Endothelial cell of umbilical vein (primary cell): ENCODE measurements at regions of chr15 and their contacts with region 1.

Region 1: GRCh38 chr15:75647370-75648155 is at the start of gene SNX33:
- DNase-seq: peak; percentile 76
- H3K4me3 ChIP-seq: peak within 1 kb of the TSS; percentile 53 to 72 (median 64)
- H3K27ac ChIP-seq: peak within 1 kb of the TSS; percentile 37
- H3K4me1 ChIP-seq: peaks cover 29% of the 10 kb centered on the region
- H3K27me3 ChIP-seq: no peaks in the 10 kb centered on the region
- CTCF ChIP-seq: peak; percentile 67 to 74
- POLR2A ChIP-seq: no peak
- total RNA-seq, gene SNX33: 10.6 and 12.6 TPM in 2 replicates

Region 2: GRCh38 chr15:75508840-75509532 is 138.6 kb before region 1 on chr15:
- CTCF ChIA-PET with region 1: interaction called, 16 read pairs
- POLR2A ChIA-PET with region 1: no interaction called
- dilution Hi-C with region 1: no loop called
- intact Hi-C with region 1: no loop called
- DNase-seq: peak; percentile 58
- H3K4me3 ChIP-seq: no peak overlapping the region
- H3K27ac ChIP-seq: no peak overlapping the region
- H3K4me1 ChIP-seq: no peaks in the 10 kb centered on the region
- H3K27me3 ChIP-seq: no peaks in the 10 kb centered on the region
- CTCF ChIP-seq: peak; percentile 30 to 61
- POLR2A ChIP-seq: no peak

Region 3: GRCh38 chr15:75561888-75562287 is 85.7 kb before region 1 on chr15:
- CTCF ChIA-PET with region 1: no interaction called
- POLR2A ChIA-PET with region 1: no interaction called
- dilution Hi-C with region 1: no loop called
- intact Hi-C with region 1: no loop called
- DNase-seq: no peak
- H3K4me3 ChIP-seq: no peak overlapping the region
- H3K27ac ChIP-seq: no peak overlapping the region
- H3K4me1 ChIP-seq: no peaks in the 10 kb centered on the region
- H3K27me3 ChIP-seq: no peaks in the 10 kb centered on the region
- CTCF ChIP-seq: no peak
- POLR2A ChIP-seq: no peak

Region 4: DNA sequence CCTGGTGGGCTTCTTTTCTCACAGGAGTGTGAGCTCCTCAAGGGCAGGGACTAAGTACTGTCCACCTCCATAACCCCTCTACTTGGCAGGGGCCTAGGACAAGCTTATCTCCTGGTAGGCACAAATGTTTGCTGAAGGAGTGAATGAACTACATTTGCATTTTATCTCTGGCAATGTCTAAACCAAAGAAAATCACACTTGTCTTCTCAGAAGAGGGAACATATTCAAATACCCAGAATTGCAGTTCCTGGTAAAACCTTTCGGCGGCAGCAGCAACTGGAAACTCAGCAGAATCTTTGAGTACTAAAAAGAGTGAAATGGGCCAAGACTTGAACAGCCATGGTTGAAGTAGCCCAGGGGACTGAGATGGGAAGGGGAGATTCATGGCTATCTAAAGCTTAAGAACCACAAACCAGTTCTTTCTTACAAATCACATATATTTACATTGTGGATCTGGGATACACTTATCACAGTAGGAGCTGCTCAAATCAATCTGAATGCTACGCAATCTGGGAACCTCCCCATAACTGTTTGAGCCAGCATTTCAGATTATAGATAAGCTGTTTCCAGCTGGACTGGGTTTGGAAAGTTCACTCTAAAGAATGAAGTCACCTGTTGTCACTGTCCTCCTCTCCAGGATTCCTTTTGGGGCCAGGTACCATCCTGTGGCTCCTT is 49.8 kb before region 1 on chr15:
- CTCF ChIA-PET with region 1: interaction called, 16 read pairs
- POLR2A ChIA-PET with region 1: no interaction called
- dilution Hi-C with region 1: no loop called
- intact Hi-C with region 1: no loop called
- DNase-seq: peak; percentile 36
- H3K4me3 ChIP-seq: no peak overlapping the region
- H3K27ac ChIP-seq: no peak overlapping the region
- H3K4me1 ChIP-seq: peaks cover 9% of the 10 kb centered on the region
- H3K27me3 ChIP-seq: no peaks in the 10 kb centered on the region
- CTCF ChIP-seq: peak; percentile 15 to 30
- POLR2A ChIP-seq: no peak

Region 5: GRCh38 chr15:75666823-75667501 is 19.4 kb after region 1 on chr15:
- CTCF ChIA-PET with region 1: interaction called, 13 read pairs
- POLR2A ChIA-PET with region 1: no interaction called
- dilution Hi-C with region 1: no loop called
- intact Hi-C with region 1: loop called (anchors 2 kb)
- DNase-seq: peak; percentile 85
- H3K4me3 ChIP-seq: no peak overlapping the region
- H3K27ac ChIP-seq: peak overlapping the region; percentile 50
- H3K4me1 ChIP-seq: peaks cover 10% of the 10 kb centered on the region
- H3K27me3 ChIP-seq: no peaks in the 10 kb centered on the region
- CTCF ChIP-seq: no peak
- POLR2A ChIP-seq: no peak